ENCODE measurements at regions of chr12 and their contacts with region 1.

Region 1: DNA sequence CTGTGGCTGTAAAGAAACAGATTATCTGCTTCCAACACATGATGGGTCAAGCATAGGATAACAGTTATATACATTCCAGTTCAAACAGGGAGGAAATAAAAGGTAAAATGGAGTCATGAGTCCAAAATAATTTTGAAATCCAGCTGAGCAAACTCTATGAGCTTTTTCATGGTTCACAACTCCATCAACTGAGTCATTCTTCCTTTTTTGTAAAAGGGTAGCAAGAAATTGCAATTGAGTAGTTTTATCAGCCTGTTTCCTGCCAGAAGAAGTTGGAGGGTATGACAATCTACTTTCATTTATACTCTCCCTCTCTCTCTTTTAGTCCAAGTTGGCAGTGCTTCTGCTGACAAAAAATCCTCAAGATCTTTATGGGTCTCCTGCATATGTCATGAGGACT is 95.6 kb downstream of the CPNE8 start:
- DNase-seq: no peak
- ATAC-seq: no peak
- H3K4me3 ChIP-seq: no peak overlapping the region
- H3K27ac ChIP-seq: no peak overlapping the region
- H3K4me1 ChIP-seq: no peaks in the 10 kb centered on the region
- H3K27me3 ChIP-seq: no peaks in the 10 kb centered on the region
- CTCF ChIP-seq: no peak

Region 2: GRCh38 chr12:39619660-39620433 is 810.0 kb after region 1 on chr12 and contains the start of gene ABCD2:
- intact Hi-C with region 1: loop called in 1 of 2 experiments (anchors 10 kb)
- DNase-seq: peak; percentile 63 to 73
- ATAC-seq: peak; percentile 62 to 90 (median 86)
- H3K4me3 ChIP-seq: peak within 1 kb of the TSS; percentile 68
- H3K27ac ChIP-seq: peak within 1 kb of the TSS; percentile 36
- H3K4me1 ChIP-seq: peaks cover 5% of the 10 kb centered on the region
- H3K27me3 ChIP-seq: no peaks in the 10 kb centered on the region
- CTCF ChIP-seq: no peak
- total RNA-seq, gene ABCD2: 0.12 to 0.34 (median 0.24) TPM

Measured in psoas muscle (tissue), 8 donors.